Cardiac septum (tissue), 1 donor: ENCODE measurements at regions of chr14 and their contacts with region 1.

Region 1: DNA sequence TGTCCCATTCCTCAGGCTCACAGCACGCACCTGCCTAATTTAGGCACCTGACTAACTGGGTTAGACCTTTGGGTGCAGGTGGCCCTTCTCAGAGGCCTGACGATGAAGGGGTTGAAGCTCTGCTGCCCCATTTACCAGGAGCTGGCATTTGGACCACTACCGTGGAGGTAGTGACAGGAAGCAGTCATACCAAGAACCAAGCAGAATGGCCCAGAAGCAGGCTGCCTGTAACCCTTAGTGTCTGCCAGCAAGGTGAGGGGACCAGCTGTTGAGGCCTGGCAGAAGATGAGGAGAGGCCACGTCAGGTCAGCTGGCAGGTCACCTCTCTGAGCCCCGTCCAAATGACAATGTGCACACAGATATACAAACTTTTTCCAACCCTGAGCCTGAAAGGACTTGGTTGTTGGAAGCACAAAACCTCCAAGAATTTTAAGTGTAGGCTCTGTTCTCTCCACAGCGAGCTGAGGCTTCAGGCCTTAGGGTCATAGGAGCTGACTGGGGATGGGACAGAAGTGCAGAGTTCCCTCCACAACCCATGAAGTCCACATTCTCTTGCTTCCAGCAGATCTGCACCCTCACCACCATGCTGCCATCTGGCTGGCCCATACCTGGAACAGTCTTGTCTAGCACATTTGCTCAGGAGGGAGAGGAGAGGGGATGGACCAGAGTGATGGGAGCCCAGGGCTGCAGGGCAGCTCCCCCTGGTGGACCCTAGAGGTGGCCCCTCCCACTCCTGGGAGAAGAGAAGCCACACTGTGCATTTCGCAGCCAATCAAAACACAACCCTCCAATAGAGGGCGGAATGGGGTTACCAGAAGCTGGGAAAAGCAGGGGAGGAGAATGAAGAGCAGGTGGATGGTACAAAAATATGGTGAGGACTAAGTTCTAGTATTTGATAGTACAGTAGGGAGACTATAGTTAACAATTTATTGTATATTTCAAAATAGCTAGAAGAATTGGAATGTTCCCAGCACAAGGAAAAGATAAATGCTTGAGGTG is 23.3 kb downstream of the VASH1 start:
- DNase-seq: peak; percentile 82

Region 2: GRCh38 chr14:76710056-76711010 is 74.2 kb before region 1 on chr14:
- intact Hi-C with region 1: loop called (anchors 1 kb)
- DNase-seq: no peak